HepG2 (cell line): ENCODE measurements at regions of chr10 and their contacts with region 1.

Region 1: DNA sequence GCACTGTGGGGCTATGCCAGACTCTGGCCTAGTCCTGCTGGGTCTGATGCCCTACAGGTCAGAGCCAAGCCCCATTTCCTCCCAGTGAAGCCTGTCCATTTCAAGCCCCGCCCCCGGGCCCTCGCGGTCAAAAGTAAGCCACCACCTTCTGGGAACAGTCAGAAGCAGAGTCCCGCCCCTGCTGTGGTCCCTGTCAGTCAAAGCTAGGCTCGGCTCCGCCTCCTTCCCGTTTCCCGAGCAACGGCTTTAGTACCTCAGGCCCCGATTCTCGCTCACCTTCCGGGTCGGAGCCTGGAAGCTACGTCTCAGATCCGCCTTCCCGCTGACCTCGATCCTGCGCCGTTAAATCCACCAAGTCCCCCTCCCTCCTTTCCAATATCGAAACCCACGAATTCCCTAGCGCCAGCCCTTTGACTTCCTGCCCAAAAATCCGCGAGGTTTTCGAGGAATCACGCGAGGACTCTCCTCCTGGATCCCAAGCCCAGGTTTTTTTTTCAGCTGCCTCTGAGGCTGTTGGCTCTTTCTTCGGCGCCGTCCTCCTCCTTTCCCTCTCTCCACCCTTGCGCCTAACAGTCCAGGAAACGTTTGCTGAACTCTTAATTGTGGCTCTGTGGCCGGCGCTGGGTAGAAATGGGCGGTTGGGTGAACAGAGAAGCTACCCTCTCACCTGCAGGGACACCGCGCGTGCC is 11.8 kb downstream of the SFXN3 start:
- DNase-seq: peak; percentile 94
- ATAC-seq: peak; percentile 90
- H3K4me3 ChIP-seq: peak overlapping the region; percentile 51 to 74 (median 52)
- H3K27ac ChIP-seq: peak overlapping the region; percentile 87
- H3K4me1 ChIP-seq: peaks cover 61% of the 10 kb centered on the region
- H3K27me3 ChIP-seq: no peaks in the 10 kb centered on the region; a peak in 1 of 5 replicates
- CTCF ChIP-seq: no peak
- EP300 ChIP-seq: no peak
- POLR2A ChIP-seq: peak; percentile 60 to 67
- RAD21 ChIP-seq: no peak

Region 2: GRCh38 chr10:100982951-100983830 is 59.6 kb before region 1 on chr10:
- CTCF ChIA-PET with region 1: no interaction called
- POLR2A ChIA-PET with region 1: no interaction called
- in situ Hi-C with region 1: no loop called
- intact Hi-C with region 1: no loop called
- DNase-seq: no peak
- ATAC-seq: no peak
- H3K4me3 ChIP-seq: no peak overlapping the region
- H3K27ac ChIP-seq: peak overlapping the region; percentile 13
- H3K4me1 ChIP-seq: peaks cover 25% of the 10 kb centered on the region
- H3K27me3 ChIP-seq: no peaks in the 10 kb centered on the region; a peak in 1 of 5 replicates
- CTCF ChIP-seq: no peak
- EP300 ChIP-seq: no peak
- POLR2A ChIP-seq: 0 out of 4 replicates have a peak, but pooled peaks of 1 of the 2 experiments have one; percentile 30
- RAD21 ChIP-seq: no peak

Region 3: DNA sequence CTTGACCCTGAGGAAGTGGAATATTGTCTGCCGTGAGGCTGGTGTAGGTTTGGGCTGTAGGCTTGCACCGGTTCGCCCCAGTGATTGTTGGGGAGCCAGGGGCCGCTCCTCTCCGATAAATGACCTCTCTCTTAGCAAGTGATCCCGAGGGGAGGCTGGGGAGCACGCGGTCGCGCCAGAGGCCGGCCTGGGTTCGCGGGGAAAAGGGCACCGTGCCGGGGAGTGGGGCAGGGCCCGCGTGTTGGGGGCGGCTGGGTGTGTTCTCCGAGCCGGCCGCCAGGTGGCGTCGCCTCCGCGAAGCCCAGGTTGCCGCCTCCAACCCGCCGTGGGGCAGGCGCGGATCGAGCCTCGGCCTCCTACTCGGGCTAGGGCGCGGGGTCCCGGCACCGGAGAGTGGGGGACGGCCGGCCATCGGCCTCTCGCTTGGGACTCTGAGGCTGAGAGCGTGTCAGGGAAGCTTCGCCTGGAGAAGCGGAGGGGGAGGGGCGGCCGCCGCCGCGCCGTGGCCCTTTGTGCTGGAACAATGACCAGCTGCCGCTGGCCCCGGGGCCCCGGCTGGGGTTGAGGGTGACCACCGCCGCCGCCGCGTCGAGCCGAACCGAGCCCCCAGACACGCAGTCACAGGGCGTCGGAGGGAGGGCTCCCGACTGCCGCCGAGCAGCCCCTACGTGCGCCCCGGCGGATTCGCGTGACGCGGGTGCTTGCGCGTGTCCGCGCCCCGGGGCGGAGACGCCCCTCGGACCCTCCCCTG is 43.6 kb before region 1 on chr10:
- CTCF ChIA-PET with region 1: no interaction called
- POLR2A ChIA-PET with region 1: interaction called, 12 read pairs
- in situ Hi-C with region 1: no loop called
- intact Hi-C with region 1: no loop called
- DNase-seq: peak; percentile 45
- ATAC-seq: peak; percentile 35
- H3K4me3 ChIP-seq: peak overlapping the region; percentile 71 to 99 (median 91)
- H3K27ac ChIP-seq: peak overlapping the region; percentile 89
- H3K4me1 ChIP-seq: peaks cover 32% of the 10 kb centered on the region
- H3K27me3 ChIP-seq: no peaks in the 10 kb centered on the region; a peak in 1 of 5 replicates
- CTCF ChIP-seq: peak; percentile 87
- EP300 ChIP-seq: no peak
- POLR2A ChIP-seq: peak in 1 of 2 experiments; percentile 64; a peak in 2 of 4 replicates
- RAD21 ChIP-seq: peak; percentile 90

Region 4: GRCh38 chr10:101018600-101019439 is 24.0 kb before region 1 on chr10:
- CTCF ChIA-PET with region 1: interaction called, 7 read pairs
- POLR2A ChIA-PET with region 1: interaction called, 16 read pairs
- in situ Hi-C with region 1: no loop called
- intact Hi-C with region 1: no loop called
- DNase-seq: peak; percentile 72
- ATAC-seq: peak; percentile 91
- H3K4me3 ChIP-seq: peak overlapping the region; percentile 25 to 69 (median 55); a peak in 5 of 6 replicates
- H3K27ac ChIP-seq: no peak overlapping the region
- H3K4me1 ChIP-seq: peaks cover 34% of the 10 kb centered on the region
- H3K27me3 ChIP-seq: peaks cover 1 to 13% of the 10 kb centered on the region in 2 experiments; a peak in 2 of 5 replicates
- CTCF ChIP-seq: peak; percentile 100
- EP300 ChIP-seq: no peak
- POLR2A ChIP-seq: no peak
- RAD21 ChIP-seq: peak; percentile 85

Region 5: DNA sequence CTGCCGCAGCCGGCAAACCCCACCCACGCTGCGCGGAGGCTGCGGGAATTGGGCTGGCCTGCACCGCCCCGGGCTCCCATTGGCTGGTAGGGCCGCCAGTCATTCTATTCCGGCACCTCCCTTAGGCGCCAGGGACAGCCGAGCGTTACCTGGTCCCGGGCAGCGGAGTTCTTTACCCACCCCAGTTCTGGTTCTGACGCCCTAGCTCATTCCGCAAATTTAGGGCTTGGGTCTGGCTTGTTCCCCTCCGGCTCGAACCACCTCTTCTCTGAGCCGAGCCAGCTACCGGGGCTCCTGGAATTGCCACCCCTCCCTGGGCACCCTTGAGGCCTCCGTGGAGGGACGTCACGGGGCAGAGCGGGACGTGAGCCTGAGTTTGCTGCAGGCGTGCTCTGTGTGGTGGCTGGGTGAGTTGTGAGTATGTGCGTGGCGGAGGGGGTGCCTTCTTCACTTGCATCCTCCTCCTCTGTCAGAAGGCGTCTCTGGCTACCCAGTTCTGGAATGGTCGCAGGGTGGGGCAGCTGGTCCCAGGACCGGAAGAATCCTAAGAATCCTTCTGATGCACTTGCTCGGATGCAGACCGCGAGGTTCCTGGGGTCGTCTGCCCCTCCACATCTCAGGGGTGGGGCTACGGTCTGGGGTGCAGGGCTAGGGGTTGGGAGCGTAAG is 11.5 kb before region 1 on chr10 and contains the starts of genes PDZD7 and SFXN3:
- CTCF ChIA-PET with region 1: no interaction called
- POLR2A ChIA-PET with region 1: interaction called, 51 read pairs
- in situ Hi-C with region 1: no loop called
- intact Hi-C with region 1: no loop called
- DNase-seq: peak; percentile 79
- ATAC-seq: peak; percentile 90
- H3K4me3 ChIP-seq: peak within 1 kb of the TSS; percentile 73 to 80 (median 74)
- H3K27ac ChIP-seq: peak within 1 kb of the TSS; percentile 65
- H3K4me1 ChIP-seq: peaks cover 66% of the 10 kb centered on the region
- H3K27me3 ChIP-seq: no peaks in the 10 kb centered on the region; a peak in 1 of 5 replicates
- CTCF ChIP-seq: no peak
- EP300 ChIP-seq: no peak
- POLR2A ChIP-seq: no peak
- RAD21 ChIP-seq: no peak
- total RNA-seq, gene PDZD7: 0.60 and 0.73 TPM in 2 replicates
- total RNA-seq, gene SFXN3: 11.9 and 16.8 TPM in 2 replicates

Region 6: DNA sequence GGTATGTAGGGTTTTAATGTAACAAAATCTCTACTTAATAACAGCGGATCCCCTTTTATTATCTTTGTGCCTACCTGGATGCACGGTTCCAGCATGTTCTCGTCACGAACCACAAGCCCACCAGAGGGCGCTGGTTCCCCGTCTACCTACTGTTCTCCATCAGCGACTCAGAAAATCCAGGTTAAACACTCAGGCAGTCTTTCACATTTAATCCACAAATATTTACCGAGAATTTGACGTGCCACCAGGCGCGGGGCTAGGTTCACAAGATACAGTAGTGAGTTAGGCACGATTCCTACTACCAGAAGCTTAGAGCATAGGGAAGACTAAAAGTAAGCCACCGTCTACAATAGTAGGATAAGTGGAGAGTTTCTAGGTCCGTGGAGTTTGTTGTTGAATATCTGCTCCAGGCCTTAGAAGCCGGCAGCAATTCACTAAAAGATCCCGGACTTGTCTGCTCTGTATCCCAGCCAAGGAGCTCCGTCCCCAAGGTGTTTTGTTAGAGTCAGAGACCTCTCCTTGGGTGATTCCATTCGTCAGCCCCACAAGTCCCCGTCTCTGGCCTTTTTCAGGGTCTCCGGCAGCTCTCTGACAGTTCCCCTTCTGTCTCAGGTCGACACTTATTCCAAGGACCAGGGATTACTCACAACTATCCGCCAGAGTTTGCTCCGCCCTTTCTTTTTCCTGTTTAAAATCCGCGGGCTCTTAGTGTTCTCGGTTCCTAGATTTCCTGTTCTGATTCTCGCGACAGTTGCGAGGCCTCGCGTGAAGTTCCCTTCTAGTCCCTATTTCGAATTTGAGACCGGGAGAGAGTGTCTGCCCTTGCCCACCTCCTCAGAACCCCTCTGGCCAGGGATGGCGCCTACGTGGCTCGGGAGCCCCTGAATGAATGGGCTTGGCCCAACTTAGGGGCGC is 17.5 kb after region 1 on chr10:
- CTCF ChIA-PET with region 1: interaction called, 11 read pairs
- POLR2A ChIA-PET with region 1: interaction called, 141 read pairs
- in situ Hi-C with region 1: no loop called
- intact Hi-C with region 1: no loop called
- DNase-seq: peak; percentile 96
- ATAC-seq: peak; percentile 33
- H3K4me3 ChIP-seq: peak overlapping the region; percentile 82 to 97 (median 87)
- H3K27ac ChIP-seq: peak overlapping the region; percentile 99
- H3K4me1 ChIP-seq: peaks cover 71% of the 10 kb centered on the region
- H3K27me3 ChIP-seq: no peaks in the 10 kb centered on the region; a peak in 1 of 5 replicates
- CTCF ChIP-seq: peak; percentile 89
- EP300 ChIP-seq: no peak
- POLR2A ChIP-seq: peak in 1 of 2 experiments; percentile 45; a peak in 1 of 4 replicates
- RAD21 ChIP-seq: peak; percentile 88

Region 7: GRCh38 chr10:101067356-101068083 is 24.7 kb after region 1 on chr10:
- CTCF ChIA-PET with region 1: interaction called, 45 read pairs
- POLR2A ChIA-PET with region 1: interaction called, 141 read pairs
- in situ Hi-C with region 1: no loop called
- intact Hi-C with region 1: loop called (anchors 1 kb)
- DNase-seq: peak; percentile 81
- ATAC-seq: peak; percentile 17
- H3K4me3 ChIP-seq: peak overlapping the region; percentile 60 to 81 (median 62)
- H3K27ac ChIP-seq: peak overlapping the region; percentile 81
- H3K4me1 ChIP-seq: peaks cover 34% of the 10 kb centered on the region
- H3K27me3 ChIP-seq: peaks cover 2 to 16% of the 10 kb centered on the region in 2 experiments; a peak in 4 of 5 replicates
- CTCF ChIP-seq: peak; percentile 88
- EP300 ChIP-seq: peak in 1 of 2 experiments; percentile 38; a peak in 1 of 4 replicates
- POLR2A ChIP-seq: peak in 1 of 2 experiments; percentile 36; a peak in 1 of 4 replicates
- RAD21 ChIP-seq: peak; percentile 81

Region 8: DNA sequence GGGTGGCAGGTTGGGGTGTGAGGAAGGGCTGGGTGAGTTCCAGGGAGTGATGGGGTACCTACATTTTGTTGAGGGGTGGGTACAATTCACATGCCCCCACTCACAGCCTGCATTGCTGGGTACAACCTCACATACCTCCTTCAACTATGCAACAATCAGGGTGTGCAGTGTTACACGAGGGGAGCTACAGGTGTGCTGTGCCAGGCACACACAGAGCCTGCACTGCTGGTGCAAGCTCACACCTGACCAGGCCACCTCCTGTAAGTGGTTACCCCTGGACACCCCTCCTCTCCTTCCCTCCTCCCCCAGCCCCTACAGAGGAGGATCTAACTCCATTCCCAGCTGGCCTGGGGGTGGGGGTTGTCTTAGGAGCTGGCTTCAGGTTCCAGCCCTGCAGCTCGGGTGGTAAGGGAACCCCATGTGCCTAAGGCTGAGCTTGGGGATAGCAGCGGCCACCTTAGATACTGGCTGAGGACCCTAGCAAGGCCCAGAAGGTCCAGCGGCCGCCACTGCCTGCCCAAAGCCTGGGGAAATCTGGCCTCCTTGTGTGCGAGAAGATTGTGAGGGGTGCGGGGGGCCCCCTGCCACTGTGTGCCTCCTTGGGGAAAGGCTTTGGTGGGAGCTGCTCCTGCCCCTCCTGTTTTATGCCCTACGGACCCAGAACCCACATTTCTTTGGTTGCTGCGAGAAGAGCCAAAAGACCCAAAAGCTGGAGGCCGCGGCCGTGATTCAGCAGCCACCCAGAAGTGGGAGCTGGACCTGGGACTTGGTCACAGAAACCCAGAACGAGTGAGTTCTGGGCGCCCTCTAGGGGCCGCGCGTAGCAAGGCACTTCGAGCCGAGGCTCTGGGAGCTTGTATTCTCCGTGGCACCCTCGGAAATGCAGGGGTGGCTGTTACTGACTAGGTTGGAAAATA is 99.1 kb after region 1 on chr10:
- CTCF ChIA-PET with region 1: interaction called, 7 read pairs
- POLR2A ChIA-PET with region 1: interaction called, 15 read pairs
- in situ Hi-C with region 1: no loop called
- intact Hi-C with region 1: no loop called
- DNase-seq: peak; percentile 71
- ATAC-seq: peak; percentile 90
- H3K4me3 ChIP-seq: peak overlapping the region; percentile 27 to 71 (median 52)
- H3K27ac ChIP-seq: no peak overlapping the region
- H3K4me1 ChIP-seq: peaks cover 24% of the 10 kb centered on the region
- H3K27me3 ChIP-seq: peaks cover 12 to 66% of the 10 kb centered on the region in 2 experiments
- CTCF ChIP-seq: peak; percentile 95
- EP300 ChIP-seq: no peak
- POLR2A ChIP-seq: no peak
- RAD21 ChIP-seq: peak; percentile 95